Heart right ventricle (tissue), 16 donors: ENCODE measurements at regions of chr18 and their contacts with region 1.

Region 1: DNA sequence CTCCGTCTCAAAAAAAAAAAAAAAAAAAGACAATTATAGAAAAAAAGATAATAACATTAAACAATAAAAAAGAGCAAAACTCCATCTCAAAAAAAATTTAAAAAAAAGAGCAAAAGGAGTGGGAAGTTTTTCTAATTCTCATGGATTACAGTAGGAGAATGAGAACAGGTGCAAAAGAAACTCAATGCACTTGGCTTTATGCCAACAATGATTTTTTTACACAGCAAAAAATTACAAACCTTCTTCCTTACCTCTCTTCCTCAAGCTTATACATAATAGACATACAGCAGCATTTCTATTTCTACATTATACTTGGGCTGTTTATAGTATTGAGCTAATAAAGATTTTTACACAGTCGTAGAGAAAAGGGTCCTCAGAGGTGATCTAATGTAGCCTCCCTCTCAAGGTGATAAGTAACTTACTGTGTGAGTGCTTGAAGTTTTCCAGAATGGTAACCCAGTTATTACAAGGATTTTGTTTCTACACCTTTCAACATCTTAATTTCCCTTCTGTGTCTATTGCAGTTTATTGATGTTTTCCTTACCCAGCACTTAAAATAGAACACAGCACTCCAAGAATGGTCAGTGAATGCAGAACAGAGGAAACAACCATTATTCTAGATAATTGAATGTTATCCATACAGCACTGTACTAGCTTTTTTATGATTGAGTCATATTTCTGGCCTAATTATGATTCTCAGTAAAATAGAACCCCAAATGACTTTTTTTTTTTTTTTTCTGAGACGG is 34.9 kb upstream of the RNF138 start:
- DNase-seq: no peak
- ATAC-seq: no peak
- H3K4me3 ChIP-seq: no peak overlapping the region
- H3K27ac ChIP-seq: no peak overlapping the region
- H3K4me1 ChIP-seq: peaks cover 0 to 8% (median 0%) of the 10 kb centered on the region in 9 donors
- H3K27me3 ChIP-seq: no peaks in the 10 kb centered on the region
- CTCF ChIP-seq: no peak

Region 2: DNA sequence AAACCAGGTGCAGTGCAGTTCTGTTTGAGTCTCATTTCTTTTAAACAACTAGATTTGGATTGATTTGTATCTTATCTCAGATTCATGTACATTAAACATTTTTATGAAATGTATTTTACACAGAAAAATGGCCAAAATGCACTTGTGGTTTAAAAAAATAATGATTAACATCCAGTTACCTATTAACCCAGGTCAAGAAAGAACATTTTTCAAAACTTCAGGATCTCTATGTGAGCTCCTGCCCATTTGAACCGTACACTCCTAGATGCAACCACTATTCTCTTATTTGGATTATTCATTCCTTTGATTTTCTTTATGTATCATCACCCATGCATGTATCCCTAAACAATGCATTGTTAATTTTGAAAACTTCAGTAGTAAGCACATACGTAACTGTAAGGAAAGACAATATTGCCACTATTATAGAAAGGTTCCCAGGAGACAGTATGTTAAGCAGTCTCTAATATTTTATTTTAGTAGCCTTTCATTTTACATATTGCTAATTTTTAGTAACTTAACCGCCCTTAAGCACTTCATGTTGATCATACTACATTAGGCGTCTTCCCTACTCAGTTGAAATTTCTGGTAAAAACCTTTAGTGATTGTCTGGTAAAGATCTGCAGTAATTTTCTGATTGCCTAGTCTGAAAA is 57.6 kb after region 1 on chr18:
- intact Hi-C with region 1: loop called in 1 of 10 experiments (anchors 5 kb)
- DNase-seq: no peak
- ATAC-seq: no peak
- H3K4me3 ChIP-seq: no peak overlapping the region
- H3K27ac ChIP-seq: no peak overlapping the region
- H3K4me1 ChIP-seq: peaks cover 0 to 11% (median 0%) of the 10 kb centered on the region in 9 donors
- H3K27me3 ChIP-seq: no peaks in the 10 kb centered on the region
- CTCF ChIP-seq: no peak